ENCODE measurements at regions of chr2 and their contacts with region 1.

Region 1: DNA sequence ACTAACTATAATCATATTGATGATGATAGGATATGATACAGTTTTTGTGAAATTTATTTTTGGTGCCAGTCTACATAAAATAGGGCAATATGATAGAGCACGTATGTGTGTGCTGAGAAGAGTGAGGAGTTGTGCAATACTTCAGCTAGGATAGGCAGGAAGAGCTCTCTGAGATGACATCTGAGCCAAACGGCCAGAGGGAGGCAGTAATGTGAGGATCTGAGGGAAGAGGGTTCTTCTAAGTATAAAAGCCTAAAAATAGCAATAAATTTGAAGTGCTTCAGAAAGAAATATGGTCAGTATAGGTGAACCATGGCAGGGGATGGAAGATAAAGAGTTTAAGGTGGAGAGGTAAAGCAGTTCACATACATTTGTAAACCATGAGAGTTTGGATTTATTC is 102.5 kb downstream of the OLA1 start:
- DNase-seq: no peak
- H3K4me3 ChIP-seq: no peak overlapping the region
- H3K27ac ChIP-seq: no peak overlapping the region
- H3K4me1 ChIP-seq: no peaks in the 10 kb centered on the region
- H3K27me3 ChIP-seq: no peaks in the 10 kb centered on the region
- CTCF ChIP-seq: peak in 1 of 2 donors; percentile 14

Region 2: DNA sequence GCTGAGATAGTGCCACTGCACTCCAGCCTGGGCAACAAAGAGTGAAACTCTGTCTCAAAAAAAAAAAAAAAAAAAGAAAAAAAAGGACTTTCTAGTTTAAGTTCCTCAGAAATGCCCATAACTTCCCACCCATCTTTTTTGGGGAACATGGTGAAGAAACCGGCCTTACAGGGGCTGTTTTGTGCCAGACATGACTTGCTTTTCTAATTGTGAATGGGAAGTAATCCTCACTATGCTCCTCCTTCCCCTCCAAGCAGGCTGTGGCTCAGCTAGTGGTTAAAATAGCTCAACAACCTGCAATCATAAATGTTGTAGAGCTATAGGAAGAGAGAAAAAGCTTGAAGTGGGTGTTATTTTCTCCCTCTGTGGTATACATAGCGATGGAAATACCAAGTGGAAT is 136.6 kb after region 1 on chr2:
- CTCF ChIA-PET with region 1: interaction called, 18 read pairs
- dilution Hi-C with region 1: no loop called
- in situ Hi-C with region 1: no loop called
- intact Hi-C with region 1: no loop called
- DNase-seq: no peak
- H3K4me3 ChIP-seq: no peak overlapping the region
- H3K27ac ChIP-seq: no peak overlapping the region
- H3K4me1 ChIP-seq: no peaks in the 10 kb centered on the region
- H3K27me3 ChIP-seq: no peaks in the 10 kb centered on the region
- CTCF ChIP-seq: no peak

Measured in mammary epithelial cell (primary cell).